Activated CD8-positive, alpha-beta T cell treated with anti-CD3 and anti-CD28 coated beads, Interleukin-2, amount 10 ng/mL, durations not matched to agents 7 days and 5 days (primary cell): ENCODE measurements at regions of chr5 and their contacts with region 1.

Region 1: GRCh38 chr5:151740336-151740942 is 18.0 kb downstream of the ATOX1 start:
- DNase-seq: peak; percentile 66
- ATAC-seq: peak; percentile 75
- H3K4me3 Mint-ChIP-seq: no peak overlapping the region
- H3K27ac Mint-ChIP-seq: no peak overlapping the region
- H3K4me1 Mint-ChIP-seq: peaks cover 18% of the 10 kb centered on the region
- H3K27me3 Mint-ChIP-seq: no peaks in the 10 kb centered on the region

Region 2: DNA sequence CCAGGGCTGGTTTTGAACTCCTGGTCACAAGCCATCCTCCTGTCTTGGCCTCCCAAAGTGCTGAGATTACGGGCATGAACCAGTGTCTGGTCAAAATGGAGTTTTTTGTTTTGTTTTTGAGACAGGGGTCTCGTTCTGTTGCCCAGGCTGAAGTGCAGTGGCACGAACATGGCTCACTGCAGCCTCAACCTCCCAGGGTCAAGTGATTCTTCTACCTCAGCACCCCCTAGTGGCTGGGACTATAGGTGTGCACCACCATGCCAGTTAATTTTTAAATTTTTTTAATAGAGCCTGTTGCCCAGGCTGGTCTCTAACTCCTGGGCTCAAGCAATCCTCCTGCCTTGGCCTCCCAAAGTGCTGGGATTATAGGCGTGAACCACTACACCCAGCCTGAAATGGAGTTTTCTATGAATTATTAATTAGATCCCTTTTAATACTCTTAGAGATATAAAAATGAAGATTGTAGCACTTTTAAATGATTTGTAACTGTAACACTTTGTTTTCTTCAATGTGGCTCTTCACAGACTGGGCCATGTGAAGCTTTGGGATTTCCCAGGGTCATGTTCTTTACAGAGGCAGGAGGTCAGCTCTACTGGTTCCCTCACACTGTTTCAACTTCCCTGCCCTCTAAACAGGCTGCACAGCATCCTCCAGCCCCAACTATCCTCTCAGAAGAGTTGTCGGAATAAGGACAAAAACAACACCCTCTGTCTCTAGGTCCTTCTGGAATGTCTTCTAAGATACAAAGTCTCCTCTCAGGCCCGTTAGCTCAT is 21.0 kb before region 1 on chr5:
- CTCF ChIA-PET with region 1: interaction called, 15 read pairs
- POLR2A ChIA-PET with region 1: no interaction called
- DNase-seq: peak; percentile 40
- ATAC-seq: peak; percentile 67
- H3K4me3 Mint-ChIP-seq: no peak overlapping the region
- H3K27ac Mint-ChIP-seq: no peak overlapping the region
- H3K4me1 Mint-ChIP-seq: no peaks in the 10 kb centered on the region
- H3K27me3 Mint-ChIP-seq: no peaks in the 10 kb centered on the region

Region 3: GRCh38 chr5:151751091-151751490 is 10.7 kb after region 1 on chr5:
- CTCF ChIA-PET with region 1: interaction called, 42 read pairs
- POLR2A ChIA-PET with region 1: no interaction called
- DNase-seq: no peak
- ATAC-seq: no peak
- H3K4me3 Mint-ChIP-seq: no peak overlapping the region
- H3K27ac Mint-ChIP-seq: no peak overlapping the region
- H3K4me1 Mint-ChIP-seq: peaks cover 37% of the 10 kb centered on the region
- H3K27me3 Mint-ChIP-seq: no peaks in the 10 kb centered on the region

Region 4: DNA sequence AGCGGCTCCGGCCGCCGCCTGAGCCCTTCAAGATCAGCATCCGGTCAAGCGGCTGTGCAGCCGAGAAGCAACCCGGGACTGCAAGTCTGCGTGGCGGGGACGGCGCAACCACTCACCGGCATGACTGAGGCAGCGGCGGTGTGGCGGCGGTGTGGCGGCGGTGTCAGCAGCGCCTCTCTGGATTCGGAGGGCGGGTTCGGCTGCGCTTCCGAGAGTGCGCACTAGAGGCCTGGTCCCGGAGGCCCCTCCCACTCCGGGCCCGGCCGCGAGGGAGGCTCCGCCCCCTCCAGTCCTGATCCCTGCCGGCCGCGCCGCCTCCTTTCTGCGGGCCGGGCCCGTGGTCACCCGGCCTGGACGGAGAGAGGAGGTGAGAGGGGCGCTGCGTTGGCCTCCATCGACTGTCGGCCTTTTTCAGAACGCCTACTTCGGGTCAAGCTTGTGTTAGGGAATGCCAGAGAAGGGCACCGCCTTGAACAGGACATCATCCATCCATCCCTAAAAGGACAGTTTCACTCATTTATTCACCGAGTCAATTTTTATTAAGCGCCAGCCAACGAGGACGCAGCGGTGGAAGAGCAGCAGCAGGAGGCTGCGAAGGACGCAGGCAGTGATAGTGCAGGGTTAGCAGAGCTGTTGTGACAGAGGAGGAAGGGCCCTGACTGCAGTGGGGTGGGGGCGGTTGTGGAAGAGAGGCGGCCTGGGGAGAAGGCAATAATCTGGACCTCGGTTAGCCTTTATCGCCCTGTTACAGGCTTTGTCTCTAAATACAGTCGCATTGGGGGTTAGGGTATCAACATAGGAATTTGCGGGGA is 18.2 kb after region 1 on chr5 and contains the start of gene ATOX1:
- CTCF ChIA-PET with region 1: interaction called, 11 read pairs
- POLR2A ChIA-PET with region 1: no interaction called
- DNase-seq: peak; percentile 91
- ATAC-seq: peak; percentile 99
- H3K4me3 Mint-ChIP-seq: peak within 1 kb of the TSS; percentile 89
- H3K27ac Mint-ChIP-seq: peak within 1 kb of the TSS; percentile 85
- H3K4me1 Mint-ChIP-seq: peaks cover 34% of the 10 kb centered on the region
- H3K27me3 Mint-ChIP-seq: no peaks in the 10 kb centered on the region
- total RNA-seq, gene ATOX1: 45.2 to 46.6 TPM

Region 5: DNA sequence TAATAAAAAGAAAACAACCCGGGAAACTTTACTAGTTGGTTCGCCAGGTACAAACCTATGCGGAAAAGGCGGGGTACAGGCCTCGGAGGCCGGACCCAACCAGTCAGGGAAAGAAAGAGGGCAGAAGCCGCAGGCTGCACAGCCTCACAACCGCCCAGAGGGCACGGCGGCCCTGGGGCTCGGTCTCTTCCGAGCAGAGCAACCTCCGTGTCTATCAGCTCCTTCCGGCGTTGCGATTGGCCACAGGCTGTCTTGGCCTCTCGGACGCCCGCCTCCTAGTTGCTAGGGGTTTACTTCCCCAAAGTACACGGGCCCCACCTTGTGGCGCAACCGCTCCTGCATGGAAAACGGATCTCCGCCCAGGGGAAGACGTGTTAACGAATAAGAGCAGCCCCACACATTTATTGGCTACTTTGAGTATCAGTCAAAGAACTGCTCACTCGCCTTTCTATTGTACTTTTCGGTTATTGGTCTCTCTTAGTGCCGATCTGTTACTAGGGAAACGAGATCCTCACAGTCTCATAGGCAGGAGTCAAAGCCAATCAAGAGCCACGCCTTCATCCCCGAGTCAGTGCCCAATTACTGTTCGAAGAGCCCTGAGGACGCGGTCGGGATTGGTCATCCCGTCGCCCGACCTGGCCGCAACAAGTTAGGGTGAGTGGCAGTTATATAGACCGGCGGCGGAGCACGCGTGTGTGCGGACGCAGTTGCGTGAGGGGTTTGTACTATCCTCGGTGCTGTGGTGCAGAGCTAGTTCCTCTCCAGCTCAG is 31.0 kb after region 1 on chr5 and contains the start of gene G3BP1:
- CTCF ChIA-PET with region 1: interaction called, 9 read pairs
- POLR2A ChIA-PET with region 1: interaction called, 32 read pairs
- DNase-seq: peak; percentile 100
- ATAC-seq: peak; percentile 84
- H3K4me3 Mint-ChIP-seq: peak within 1 kb of the TSS; percentile 87
- H3K27ac Mint-ChIP-seq: peak within 1 kb of the TSS; percentile 81
- H3K4me1 Mint-ChIP-seq: peaks cover 33% of the 10 kb centered on the region
- H3K27me3 Mint-ChIP-seq: no peaks in the 10 kb centered on the region
- total RNA-seq, gene G3BP1: 193 to 213 TPM

Region 6: DNA sequence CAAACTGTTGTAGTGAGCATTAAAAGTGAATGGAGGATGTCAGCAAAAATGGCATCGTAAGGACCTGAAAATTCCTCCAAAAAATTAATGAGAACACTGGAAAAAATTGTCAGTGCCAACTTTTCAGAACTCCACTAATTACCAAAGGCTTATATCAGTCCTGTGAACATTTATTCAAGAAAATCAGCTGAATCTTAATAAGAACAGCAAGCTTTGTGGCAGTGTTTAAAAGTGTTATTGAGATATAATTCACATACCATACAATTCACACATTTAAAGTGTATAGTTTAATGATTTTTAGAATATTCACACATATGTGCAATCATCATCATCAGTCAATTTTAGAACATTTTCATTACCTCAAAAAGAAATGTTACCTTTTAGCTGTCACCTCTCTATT is 88.9 kb after region 1 on chr5:
- CTCF ChIA-PET with region 1: no interaction called
- POLR2A ChIA-PET with region 1: no interaction called
- DNase-seq: no peak
- ATAC-seq: no peak
- H3K4me3 Mint-ChIP-seq: no peak overlapping the region
- H3K27ac Mint-ChIP-seq: no peak overlapping the region
- H3K4me1 Mint-ChIP-seq: peaks cover 8% of the 10 kb centered on the region
- H3K27me3 Mint-ChIP-seq: no peaks in the 10 kb centered on the region